ENCODE measurements at regions of chr3 and their contacts with region 1.

Region 1: GRCh38 chr3:46909535-46910442 is 32.3 kb downstream of the PTH1R start:
- DNase-seq: peak; percentile 83 to 88
- H3K4me3 ChIP-seq: no peak overlapping the region
- H3K4me3 Mint-ChIP-seq: no peak overlapping the region
- H3K27ac Mint-ChIP-seq: no peak overlapping the region
- H3K4me1 ChIP-seq: no peaks in the 10 kb centered on the region
- H3K4me1 Mint-ChIP-seq: no peaks in the 10 kb centered on the region
- H3K27me3 ChIP-seq: no peaks in the 10 kb centered on the region
- H3K27me3 Mint-ChIP-seq: no peaks in the 10 kb centered on the region
- CTCF ChIP-seq: peak; percentile 70 to 88

Region 2: GRCh38 chr3:46705022-46705530 is 204.7 kb before region 1 on chr3:
- CTCF ChIA-PET with region 1: interaction called, 5 read pairs
- POLR2A ChIA-PET with region 1: no interaction called
- intact Hi-C with region 1: loop called (anchors 1 kb)
- DNase-seq: peak; percentile 78 to 79
- H3K4me3 ChIP-seq: no peak overlapping the region
- H3K4me3 Mint-ChIP-seq: no peak overlapping the region
- H3K27ac Mint-ChIP-seq: no peak overlapping the region
- H3K4me1 ChIP-seq: no peaks in the 10 kb centered on the region
- H3K4me1 Mint-ChIP-seq: no peaks in the 10 kb centered on the region
- H3K27me3 ChIP-seq: no peaks in the 10 kb centered on the region; the same call in 1 of the 2 replicates
- H3K27me3 Mint-ChIP-seq: peaks cover 6% of the 10 kb centered on the region
- CTCF ChIP-seq: peak; percentile 91 to 95

Region 3: DNA sequence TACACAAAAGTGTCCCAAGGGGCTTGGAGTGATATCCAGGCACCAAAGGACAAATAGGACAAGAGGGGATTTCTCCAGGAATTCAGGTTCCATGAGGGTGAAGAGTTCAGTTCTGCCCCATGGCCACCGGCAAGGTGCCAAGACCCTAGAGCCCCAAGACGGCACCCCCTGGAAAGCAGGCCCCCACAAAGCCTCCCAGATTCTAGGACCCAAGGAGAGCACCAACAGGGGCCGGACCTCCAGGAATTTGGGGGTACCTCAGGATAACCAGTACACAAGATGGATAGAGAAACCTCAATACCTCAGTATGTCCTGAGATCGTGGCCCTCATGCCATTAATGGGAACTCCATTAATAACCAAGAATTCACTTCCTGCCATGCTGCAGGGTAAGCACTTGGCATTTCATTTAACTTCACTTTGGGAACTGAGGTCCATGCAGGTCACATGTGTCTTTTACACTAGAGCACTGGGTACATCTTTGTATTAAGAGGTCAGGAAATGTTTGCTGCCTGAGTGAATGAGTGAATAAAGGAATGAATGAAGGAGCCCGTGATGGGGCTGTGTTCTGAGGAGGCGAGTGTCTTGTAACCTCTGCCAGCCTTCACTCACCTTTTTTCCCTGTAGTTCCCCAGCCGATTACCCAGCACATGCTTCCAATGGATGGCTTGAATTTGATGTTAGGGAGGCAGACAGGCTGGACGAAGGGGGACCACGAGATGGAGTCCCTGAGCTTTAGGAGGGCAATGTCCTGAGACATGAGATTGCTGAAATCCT is 176.6 kb before region 1 on chr3:
- CTCF ChIA-PET with region 1: interaction called, 12 read pairs
- POLR2A ChIA-PET with region 1: no interaction called
- intact Hi-C with region 1: loop called (anchors 2 kb)
- DNase-seq: peak in 1 of 2 experiments; percentile 32
- H3K4me3 ChIP-seq: no peak overlapping the region
- H3K4me3 Mint-ChIP-seq: no peak overlapping the region
- H3K27ac Mint-ChIP-seq: no peak overlapping the region
- H3K4me1 ChIP-seq: no peaks in the 10 kb centered on the region
- H3K4me1 Mint-ChIP-seq: no peaks in the 10 kb centered on the region
- H3K27me3 ChIP-seq: no peaks in the 10 kb centered on the region
- H3K27me3 Mint-ChIP-seq: peaks cover 9% of the 10 kb centered on the region
- CTCF ChIP-seq: peak in 1 of 2 experiments; percentile 61

Region 4: DNA sequence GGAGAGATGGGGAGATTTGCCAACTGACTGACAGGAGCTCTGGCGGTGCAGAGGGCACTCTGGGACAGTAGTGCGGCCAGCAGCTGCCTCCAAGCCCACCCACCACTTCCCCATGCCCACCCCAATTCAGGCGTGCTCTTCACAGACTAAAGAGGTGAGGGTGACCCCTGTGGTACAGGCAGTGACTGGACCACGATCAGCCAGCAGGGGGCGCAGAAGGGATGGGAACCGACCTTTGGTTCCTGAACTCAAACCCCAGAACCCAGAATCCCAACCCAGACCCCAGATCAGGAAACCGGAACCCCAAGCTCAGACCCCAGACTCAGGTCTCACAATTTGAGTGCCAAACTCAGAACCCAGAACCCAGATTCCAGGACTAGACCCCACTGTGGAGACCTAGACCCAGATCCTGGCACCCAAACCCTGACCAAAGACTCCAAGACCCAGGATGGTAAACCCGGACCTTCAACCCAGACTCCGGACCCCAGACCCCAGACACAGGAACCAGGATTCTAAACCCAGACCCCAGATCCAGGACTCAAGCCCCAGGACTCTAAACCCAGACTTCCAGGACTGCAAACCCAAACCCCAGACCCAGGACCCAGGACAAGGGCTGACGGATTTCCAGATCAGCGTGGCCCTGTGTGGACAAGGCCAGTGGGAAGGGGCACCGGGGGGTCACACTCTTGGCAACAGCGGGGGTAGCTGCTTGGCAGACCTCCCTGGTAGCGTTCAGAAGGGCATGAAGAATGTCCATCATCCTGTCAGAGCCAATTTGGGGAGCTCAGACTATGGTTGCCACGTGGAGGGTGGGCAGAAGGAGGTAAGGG is 42.9 kb before region 1 on chr3:
- CTCF ChIA-PET with region 1: interaction called, 7 read pairs
- POLR2A ChIA-PET with region 1: no interaction called
- intact Hi-C with region 1: loop called (anchors 2 kb)
- DNase-seq: peak; percentile 69 to 80
- H3K4me3 ChIP-seq: no peak overlapping the region
- H3K4me3 Mint-ChIP-seq: no peak overlapping the region
- H3K27ac Mint-ChIP-seq: no peak overlapping the region
- H3K4me1 ChIP-seq: peaks cover 33% of the 10 kb centered on the region
- H3K4me1 Mint-ChIP-seq: peaks cover 22% of the 10 kb centered on the region
- H3K27me3 ChIP-seq: no peaks in the 10 kb centered on the region
- H3K27me3 Mint-ChIP-seq: no peaks in the 10 kb centered on the region
- CTCF ChIP-seq: peak; percentile 80 to 94

Region 5: GRCh38 chr3:46979151-46979978 is 69.6 kb after region 1 on chr3 and contains the start of gene NBEAL2:
- CTCF ChIA-PET with region 1: no interaction called
- POLR2A ChIA-PET with region 1: no interaction called
- intact Hi-C with region 1: no loop called
- DNase-seq: peak; percentile 96
- H3K4me3 ChIP-seq: peak within 1 kb of the TSS; percentile 92
- H3K4me3 Mint-ChIP-seq: peak within 1 kb of the TSS; percentile 91
- H3K27ac Mint-ChIP-seq: peak within 1 kb of the TSS; percentile 92
- H3K4me1 ChIP-seq: peaks cover 49% of the 10 kb centered on the region
- H3K4me1 Mint-ChIP-seq: peaks cover 23% of the 10 kb centered on the region
- H3K27me3 ChIP-seq: no peaks in the 10 kb centered on the region
- H3K27me3 Mint-ChIP-seq: no peaks in the 10 kb centered on the region
- CTCF ChIP-seq: no peak
- total RNA-seq, gene NBEAL2: 62.4 and 76.9 TPM in 2 replicates

Measured in Caco-2 (cell line).